ENCODE measurements at regions of chr12 and their contacts with region 1.

Region 1: GRCh38 chr12:74537707-74538385 is at the start of gene ATXN7L3B:
- DNase-seq: peak; percentile 97
- ATAC-seq: peak; percentile 94
- H3K4me3 ChIP-seq: peak within 1 kb of the TSS; percentile 94
- H3K27ac ChIP-seq: peak within 1 kb of the TSS; percentile 85
- H3K4me1 ChIP-seq: peaks cover 29% of the 10 kb centered on the region
- H3K27me3 ChIP-seq: no peaks in the 10 kb centered on the region
- CTCF ChIP-seq: no peak
- total RNA-seq, gene ATXN7L3B: 23.7 and 25.5 TPM in 2 replicates

Region 2: DNA sequence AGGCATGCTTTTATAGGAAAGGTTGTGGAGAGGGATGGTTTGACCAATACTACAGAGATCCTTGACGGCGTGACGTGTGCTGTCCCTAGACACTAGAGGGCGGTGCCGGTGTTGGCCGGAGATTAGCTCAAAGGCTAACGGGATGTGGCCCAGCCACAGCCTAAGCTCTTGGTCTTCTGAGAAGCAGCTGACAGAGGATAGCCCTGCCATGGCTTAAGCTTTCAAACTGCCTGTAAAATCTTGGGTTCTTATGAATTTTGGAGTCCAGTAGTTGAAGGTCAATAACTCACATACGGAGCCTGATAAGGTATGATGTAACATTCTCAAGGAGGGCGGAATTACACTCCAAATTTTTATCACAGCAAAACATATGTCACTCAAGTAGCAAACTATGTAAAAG is 515.9 kb before region 1 on chr12:
- CTCF ChIA-PET with region 1: no interaction called
- POLR2A ChIA-PET with region 1: interaction called, 4 read pairs
- intact Hi-C with region 1: loop called (anchors 10 kb)
- DNase-seq: peak; percentile 84
- ATAC-seq: peak; percentile 100
- H3K4me3 ChIP-seq: no peak overlapping the region
- H3K27ac ChIP-seq: no peak overlapping the region
- H3K4me1 ChIP-seq: no peaks in the 10 kb centered on the region
- H3K27me3 ChIP-seq: no peaks in the 10 kb centered on the region
- CTCF ChIP-seq: peak; percentile 92

Region 3: GRCh38 chr12:74111688-74112360 is 426.0 kb before region 1 on chr12:
- CTCF ChIA-PET with region 1: no interaction called
- POLR2A ChIA-PET with region 1: no interaction called
- intact Hi-C with region 1: loop called (anchors 2 kb)
- DNase-seq: peak; percentile 58
- ATAC-seq: peak; percentile 70
- H3K4me3 ChIP-seq: no peak overlapping the region
- H3K27ac ChIP-seq: no peak overlapping the region
- H3K4me1 ChIP-seq: no peaks in the 10 kb centered on the region
- H3K27me3 ChIP-seq: no peaks in the 10 kb centered on the region
- CTCF ChIP-seq: peak; percentile 76

Region 4: GRCh38 chr12:74483057-74483456 is 54.8 kb before region 1 on chr12:
- CTCF ChIA-PET with region 1: no interaction called
- POLR2A ChIA-PET with region 1: no interaction called
- intact Hi-C with region 1: no loop called
- DNase-seq: no peak
- ATAC-seq: no peak
- H3K4me3 ChIP-seq: no peak overlapping the region
- H3K27ac ChIP-seq: no peak overlapping the region
- H3K4me1 ChIP-seq: no peaks in the 10 kb centered on the region
- H3K27me3 ChIP-seq: no peaks in the 10 kb centered on the region
- CTCF ChIP-seq: no peak

Region 5: DNA sequence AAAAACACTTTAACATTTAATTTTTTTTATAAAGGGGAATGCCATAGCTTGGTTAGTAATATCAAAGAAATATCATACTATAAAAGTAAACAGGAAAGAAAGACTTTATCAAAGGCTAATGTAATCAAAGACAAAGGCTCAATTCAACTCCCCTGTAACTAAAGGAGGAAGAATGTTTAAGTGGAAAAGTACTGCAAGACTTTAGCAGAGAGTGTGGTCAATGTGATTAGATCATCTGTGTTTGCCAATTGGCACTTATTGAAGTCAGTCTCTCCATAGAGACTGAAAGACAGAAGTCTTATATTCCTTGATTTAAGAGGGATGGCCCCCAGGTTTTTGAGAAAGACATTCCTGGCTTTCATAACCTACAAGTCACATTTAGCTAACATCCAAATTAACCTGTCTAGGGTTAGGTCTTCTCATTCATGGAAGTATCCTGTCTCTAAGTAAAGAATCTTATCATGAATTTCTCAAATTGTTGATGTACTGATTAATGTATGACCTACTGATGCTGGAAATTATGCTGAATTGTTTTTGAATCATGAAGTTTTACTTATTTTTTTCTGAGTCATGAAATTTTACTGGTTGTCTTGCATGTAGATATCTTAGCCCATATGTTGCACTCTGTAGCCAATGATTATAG is 65.2 kb after region 1 on chr12:
- CTCF ChIA-PET with region 1: no interaction called
- POLR2A ChIA-PET with region 1: no interaction called
- intact Hi-C with region 1: loop called (anchors 5 kb)
- DNase-seq: peak; percentile 42
- ATAC-seq: peak; percentile 77
- H3K4me3 ChIP-seq: no peak overlapping the region
- H3K27ac ChIP-seq: 0 out of 2 replicates have a peak overlapping the region, but pooled peaks have one; percentile 6
- H3K4me1 ChIP-seq: peaks cover 5% of the 10 kb centered on the region; the same call in 1 of the 2 replicates
- H3K27me3 ChIP-seq: no peaks in the 10 kb centered on the region
- CTCF ChIP-seq: no peak

Region 6: DNA sequence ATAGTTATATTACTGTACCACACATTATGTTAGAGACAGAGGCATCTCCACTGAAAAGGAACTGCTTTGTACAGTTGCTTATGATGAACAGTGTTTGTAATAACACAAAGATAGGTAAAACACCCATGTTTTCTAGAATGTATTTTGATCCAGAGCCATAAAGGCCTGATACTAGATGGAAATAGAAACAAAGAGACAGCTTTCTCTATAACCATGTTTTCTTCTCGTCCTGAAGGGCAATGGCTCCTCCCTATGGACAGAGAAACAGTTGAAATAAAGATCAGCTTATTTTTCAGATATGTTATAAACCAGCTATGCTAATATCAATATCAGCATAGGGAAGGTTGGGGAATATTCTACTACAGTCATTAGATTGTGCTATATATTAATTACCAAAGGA is 109.0 kb after region 1 on chr12:
- CTCF ChIA-PET with region 1: interaction called, 3 read pairs
- POLR2A ChIA-PET with region 1: interaction called, 3 read pairs
- intact Hi-C with region 1: loop called (anchors 1 kb)
- DNase-seq: peak; percentile 48
- ATAC-seq: peak; percentile 70
- H3K4me3 ChIP-seq: no peak overlapping the region
- H3K27ac ChIP-seq: no peak overlapping the region
- H3K4me1 ChIP-seq: no peaks in the 10 kb centered on the region
- H3K27me3 ChIP-seq: no peaks in the 10 kb centered on the region
- CTCF ChIP-seq: peak; percentile 60

Measured in PC-3 (cell line).